ENCODE measurements at regions of chr22 and their contacts with region 1.

Region 1: GRCh38 chr22:44080936-44081861 is 57.1 kb downstream of the PARVB start:
- DNase-seq: peak; percentile 72
- H3K4me3 ChIP-seq: no peak overlapping the region
- H3K27ac ChIP-seq: no peak overlapping the region
- H3K4me1 ChIP-seq: no peaks in the 10 kb centered on the region
- CTCF ChIP-seq: peak; percentile 89

Region 2: GRCh38 chr22:43993027-43993760 is 88.0 kb before region 1 on chr22:
- CTCF ChIA-PET with region 1: interaction called, 8 read pairs
- POLR2A ChIA-PET with region 1: interaction called, 3 read pairs
- intact Hi-C with region 1: loop called (anchors 1 kb)
- DNase-seq: peak; percentile 69
- H3K4me3 ChIP-seq: no peak overlapping the region
- H3K27ac ChIP-seq: no peak overlapping the region
- H3K4me1 ChIP-seq: peaks cover 10% of the 10 kb centered on the region
- CTCF ChIP-seq: peak; percentile 98

Region 3: DNA sequence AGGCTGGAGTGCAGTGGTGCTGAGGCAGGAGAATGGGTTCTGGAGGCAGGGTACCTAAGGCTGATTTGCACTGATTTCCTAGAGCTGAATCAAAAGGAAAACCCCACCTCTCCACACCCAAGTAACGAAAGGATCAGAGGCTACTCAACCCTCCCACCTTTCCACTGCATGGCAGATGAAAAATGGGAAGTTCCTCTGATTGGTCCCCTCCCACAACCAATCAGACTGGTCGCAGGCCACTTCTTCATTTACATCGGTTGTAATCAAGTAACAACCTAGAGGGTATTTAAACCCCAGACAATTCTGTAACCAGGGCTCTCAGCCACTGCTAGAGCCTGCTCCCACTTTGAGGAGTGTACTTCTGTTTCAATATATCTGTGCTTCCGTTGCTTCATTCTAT is 75.7 kb before region 1 on chr22:
- CTCF ChIA-PET with region 1: no interaction called
- POLR2A ChIA-PET with region 1: no interaction called
- intact Hi-C with region 1: no loop called
- DNase-seq: no peak
- H3K4me3 ChIP-seq: no peak overlapping the region
- H3K27ac ChIP-seq: no peak overlapping the region
- H3K4me1 ChIP-seq: no peaks in the 10 kb centered on the region
- CTCF ChIP-seq: no peak